Ovary (tissue), 10 donors: ENCODE measurements at regions of chr6 and their contacts with region 1.

Region 1: GRCh38 chr6:83067448-83068413 is at the start of gene DOP1A:
- DNase-seq: peak; percentile 92 to 96 (median 95)
- H3K4me3 ChIP-seq: peak within 1 kb of the TSS; percentile 95
- H3K27ac ChIP-seq: peak within 1 kb of the TSS; percentile 76 to 77
- H3K4me1 ChIP-seq: peaks cover 2% of the 10 kb centered on the region
- H3K27me3 ChIP-seq: no peaks in the 10 kb centered on the region
- CTCF ChIP-seq: peak; percentile 85 to 99 (median 90)
- EP300 ChIP-seq: no peak
- POLR2A ChIP-seq: peak; percentile 46
- total RNA-seq, gene DOP1A: 24.3 to 32.9 (median 28.5) TPM

Region 2: DNA sequence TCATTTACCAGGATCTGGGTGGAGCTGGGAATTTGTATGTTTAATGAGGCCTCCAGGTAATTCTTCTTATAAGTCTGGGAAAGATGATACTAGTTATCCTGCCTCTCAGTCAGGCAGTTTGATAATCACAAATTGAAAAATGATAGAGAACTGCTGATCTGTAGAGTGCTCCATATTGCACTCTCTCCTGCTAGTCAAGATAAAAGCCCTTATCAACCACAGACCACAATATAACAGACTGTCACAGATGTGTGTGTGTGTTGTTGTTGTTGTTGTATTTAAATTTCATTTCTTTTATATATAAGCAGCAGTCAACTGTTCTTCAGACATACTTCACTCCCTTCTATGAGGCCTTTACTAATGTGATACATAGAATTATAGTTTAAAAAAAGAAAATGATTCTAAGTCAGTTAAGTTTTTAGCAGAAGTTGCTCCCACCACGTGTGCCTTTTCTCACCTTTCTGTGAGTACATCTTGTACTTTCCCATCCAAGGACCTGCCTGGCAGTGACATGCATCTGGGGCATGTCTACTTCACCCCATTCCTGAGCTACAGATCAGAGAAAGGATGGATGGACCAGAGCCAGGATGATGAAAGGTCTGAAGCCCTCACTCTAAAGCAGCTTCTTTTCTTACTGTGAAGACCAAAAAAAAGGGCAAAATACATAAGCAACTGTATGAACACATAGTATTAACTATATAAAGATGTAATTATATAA is 1345.1 kb before region 1 on chr6:
- intact Hi-C with region 1: no loop called
- DNase-seq: no peak
- H3K4me3 ChIP-seq: no peak overlapping the region
- H3K27ac ChIP-seq: no peak overlapping the region
- H3K4me1 ChIP-seq: no peaks in the 10 kb centered on the region
- H3K27me3 ChIP-seq: no peaks in the 10 kb centered on the region
- CTCF ChIP-seq: no peak
- EP300 ChIP-seq: no peak
- POLR2A ChIP-seq: no peak

Region 3: DNA sequence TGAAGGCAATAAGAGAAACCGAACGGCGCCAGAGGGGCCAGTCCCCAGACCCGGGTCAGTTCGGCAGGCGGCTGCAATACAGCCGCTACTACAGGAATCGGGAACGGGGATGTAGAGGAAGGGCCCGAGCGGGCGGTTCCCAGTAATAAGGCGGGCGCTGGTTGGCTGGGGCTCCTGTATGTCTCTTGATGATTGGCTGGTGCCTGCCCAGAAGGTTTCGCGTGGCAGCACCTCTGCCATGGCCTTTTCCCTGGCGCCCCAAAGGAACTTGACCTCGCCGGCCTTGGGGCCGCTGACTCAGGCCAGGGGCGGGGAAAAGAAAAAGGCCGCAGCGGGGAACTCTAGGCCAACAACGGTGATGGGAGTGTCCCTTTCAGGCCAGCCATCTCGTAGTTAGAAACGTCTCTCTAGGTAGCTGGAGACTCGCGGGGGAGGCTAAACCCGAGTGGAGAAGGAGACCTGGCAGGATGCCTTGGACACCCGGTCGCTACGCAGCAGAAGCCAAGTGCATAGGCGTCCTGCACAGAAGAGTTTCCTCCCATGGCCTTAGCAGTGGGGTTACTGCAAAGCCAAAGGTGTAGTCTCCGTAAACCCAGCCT is 820.0 kb before region 1 on chr6 and contains the start of gene IBTK:
- intact Hi-C with region 1: loop called in 2 of 4 experiments (anchors 10 kb)
- DNase-seq: peak; percentile 93 to 98 (median 95)
- H3K4me3 ChIP-seq: peak within 1 kb of the TSS; percentile 91
- H3K27ac ChIP-seq: peak within 1 kb of the TSS; percentile 72 to 93
- H3K4me1 ChIP-seq: peaks cover 2% of the 10 kb centered on the region
- H3K27me3 ChIP-seq: no peaks in the 10 kb centered on the region
- CTCF ChIP-seq: peak in 1 of 3 donors; percentile 13
- EP300 ChIP-seq: no peak
- POLR2A ChIP-seq: peak; percentile 67
- total RNA-seq, gene IBTK: 22.1 to 37.4 (median 31.7) TPM

Region 4: GRCh38 chr6:83192871-83193746 is 125.4 kb after region 1 on chr6 and contains the starts of genes PGM3 and RWDD2A:
- intact Hi-C with region 1: loop called in 2 of 4 experiments (anchors 5 to 10 kb)
- DNase-seq: peak; percentile 88 to 92 (median 90)
- H3K4me3 ChIP-seq: peak within 1 kb of the TSS; percentile 97
- H3K27ac ChIP-seq: peak within 1 kb of the TSS; percentile 64 to 69
- H3K4me1 ChIP-seq: peaks cover 5% of the 10 kb centered on the region
- H3K27me3 ChIP-seq: no peaks in the 10 kb centered on the region
- CTCF ChIP-seq: no peak
- EP300 ChIP-seq: no peak
- POLR2A ChIP-seq: no peak
- total RNA-seq, gene PGM3: 22.4 to 48.5 (median 39.9) TPM
- total RNA-seq, gene RWDD2A: 2.8 to 5.3 (median 4.3) TPM

Region 5: GRCh38 chr6:83215131-83216047 is 147.7 kb after region 1 on chr6:
- intact Hi-C with region 1: loop called in 3 of 4 experiments (anchors 5 to 10 kb)
- DNase-seq: peak; percentile 45 to 74 (median 58)
- H3K4me3 ChIP-seq: no peak overlapping the region
- H3K27ac ChIP-seq: peak overlapping the region in 1 of 2 donors; percentile 40
- H3K4me1 ChIP-seq: peaks cover 1% of the 10 kb centered on the region
- H3K27me3 ChIP-seq: no peaks in the 10 kb centered on the region
- CTCF ChIP-seq: peak; percentile 59 to 75 (median 62)
- EP300 ChIP-seq: no peak
- POLR2A ChIP-seq: no peak